ENCODE measurements at regions of chr19 and their contacts with region 1.

Region 1: GRCh38 chr19:54159352-54160181 is at the start of gene LENG1:
- DNase-seq: peak; percentile 99
- ATAC-seq: peak; percentile 90
- H3K4me3 Mint-ChIP-seq: peak within 1 kb of the TSS; percentile 87
- H3K27ac Mint-ChIP-seq: peak within 1 kb of the TSS; percentile 98
- H3K4me1 Mint-ChIP-seq: peaks cover 56% of the 10 kb centered on the region
- H3K27me3 Mint-ChIP-seq: peaks cover 7% of the 10 kb centered on the region
- total RNA-seq, gene LENG1: 3.5 to 3.6 TPM

Region 2: GRCh38 chr19:53977429-53977990 is 182.1 kb before region 1 on chr19:
- CTCF ChIA-PET with region 1: no interaction called
- POLR2A ChIA-PET with region 1: no interaction called
- intact Hi-C with region 1: loop called in 1 of 2 experiments (anchors 1 kb)
- DNase-seq: peak; percentile 79
- ATAC-seq: peak; percentile 61
- H3K4me3 Mint-ChIP-seq: peak overlapping the region; percentile 59
- H3K27ac Mint-ChIP-seq: no peak overlapping the region
- H3K4me1 Mint-ChIP-seq: peaks cover 30% of the 10 kb centered on the region
- H3K27me3 Mint-ChIP-seq: peaks cover 53% of the 10 kb centered on the region

Region 3: GRCh38 chr19:54017261-54017660 is 142.3 kb before region 1 on chr19:
- CTCF ChIA-PET with region 1: no interaction called
- POLR2A ChIA-PET with region 1: no interaction called
- intact Hi-C with region 1: no loop called
- DNase-seq: no peak
- ATAC-seq: no peak
- H3K4me3 Mint-ChIP-seq: no peak overlapping the region
- H3K27ac Mint-ChIP-seq: no peak overlapping the region
- H3K4me1 Mint-ChIP-seq: peaks cover 4% of the 10 kb centered on the region
- H3K27me3 Mint-ChIP-seq: peaks cover 28% of the 10 kb centered on the region

Region 4: DNA sequence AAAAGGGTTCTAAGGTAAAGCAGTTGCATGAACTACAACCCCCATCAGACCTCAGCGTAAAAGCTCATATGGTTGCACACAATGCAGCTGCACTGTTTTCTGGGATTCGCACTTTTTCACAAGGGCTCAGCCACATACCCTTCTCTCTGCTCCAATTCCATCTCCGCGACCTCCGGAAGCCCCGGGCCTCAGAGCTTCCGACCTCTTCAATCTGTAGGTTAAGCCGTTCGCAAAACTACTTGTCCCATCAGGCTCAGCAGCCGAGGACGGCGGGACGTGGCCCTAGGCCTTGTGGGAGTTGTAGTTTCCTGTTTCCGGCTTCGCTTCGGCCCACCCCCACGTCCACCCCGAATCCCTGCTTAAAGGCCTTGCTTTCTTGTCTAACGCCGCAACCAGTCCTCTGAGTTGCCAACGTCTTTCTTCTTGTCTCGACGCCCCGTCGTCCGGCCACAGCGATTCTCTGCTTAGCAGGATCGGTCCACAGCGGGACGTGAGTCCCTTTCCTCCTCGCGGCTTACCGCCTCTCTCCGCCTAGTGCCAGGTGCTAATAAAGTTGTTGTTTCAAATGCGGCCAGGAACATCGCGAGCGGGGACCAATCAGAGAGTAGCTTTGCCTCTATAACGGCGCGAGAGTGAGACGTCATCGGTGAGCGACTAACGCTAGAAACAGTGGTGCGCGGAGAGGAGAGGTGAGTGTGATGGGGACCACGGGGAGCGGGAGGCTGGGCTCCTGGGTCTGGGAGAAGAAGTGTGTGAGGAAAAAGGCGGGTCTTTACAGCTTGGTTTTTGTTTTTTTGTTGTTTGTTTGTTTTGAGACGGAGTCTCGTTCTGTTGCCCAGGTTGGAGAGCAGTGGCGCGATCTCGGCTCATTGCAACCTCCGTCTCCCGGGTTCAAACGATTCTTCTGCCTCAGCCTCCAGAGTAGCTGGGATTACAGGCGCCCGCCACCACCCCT is 44.2 kb before region 1 on chr19 and contains the starts of genes PRPF31 and TFPT:
- CTCF ChIA-PET with region 1: no interaction called
- POLR2A ChIA-PET with region 1: no interaction called
- intact Hi-C with region 1: loop called (anchors 1 to 2 kb)
- DNase-seq: peak; percentile 97
- ATAC-seq: peak; percentile 94
- H3K4me3 Mint-ChIP-seq: peak within 1 kb of the TSS; percentile 83
- H3K27ac Mint-ChIP-seq: peak within 1 kb of the TSS; percentile 96
- H3K4me1 Mint-ChIP-seq: peaks cover 25% of the 10 kb centered on the region
- H3K27me3 Mint-ChIP-seq: no peaks in the 10 kb centered on the region
- total RNA-seq, gene PRPF31: 85.5 to 115 TPM
- total RNA-seq, gene TFPT: 28.5 to 39.3 TPM

Region 5: GRCh38 chr19:54203151-54203611 is 43.6 kb after region 1 on chr19:
- CTCF ChIA-PET with region 1: no interaction called
- POLR2A ChIA-PET with region 1: interaction called, 3 read pairs
- intact Hi-C with region 1: loop called (anchors 1 to 5 kb)
- DNase-seq: no peak
- ATAC-seq: no peak
- H3K4me3 Mint-ChIP-seq: peak overlapping the region; percentile 97
- H3K27ac Mint-ChIP-seq: peak overlapping the region; percentile 100
- H3K4me1 Mint-ChIP-seq: peaks cover 67% of the 10 kb centered on the region
- H3K27me3 Mint-ChIP-seq: no peaks in the 10 kb centered on the region

Region 6: DNA sequence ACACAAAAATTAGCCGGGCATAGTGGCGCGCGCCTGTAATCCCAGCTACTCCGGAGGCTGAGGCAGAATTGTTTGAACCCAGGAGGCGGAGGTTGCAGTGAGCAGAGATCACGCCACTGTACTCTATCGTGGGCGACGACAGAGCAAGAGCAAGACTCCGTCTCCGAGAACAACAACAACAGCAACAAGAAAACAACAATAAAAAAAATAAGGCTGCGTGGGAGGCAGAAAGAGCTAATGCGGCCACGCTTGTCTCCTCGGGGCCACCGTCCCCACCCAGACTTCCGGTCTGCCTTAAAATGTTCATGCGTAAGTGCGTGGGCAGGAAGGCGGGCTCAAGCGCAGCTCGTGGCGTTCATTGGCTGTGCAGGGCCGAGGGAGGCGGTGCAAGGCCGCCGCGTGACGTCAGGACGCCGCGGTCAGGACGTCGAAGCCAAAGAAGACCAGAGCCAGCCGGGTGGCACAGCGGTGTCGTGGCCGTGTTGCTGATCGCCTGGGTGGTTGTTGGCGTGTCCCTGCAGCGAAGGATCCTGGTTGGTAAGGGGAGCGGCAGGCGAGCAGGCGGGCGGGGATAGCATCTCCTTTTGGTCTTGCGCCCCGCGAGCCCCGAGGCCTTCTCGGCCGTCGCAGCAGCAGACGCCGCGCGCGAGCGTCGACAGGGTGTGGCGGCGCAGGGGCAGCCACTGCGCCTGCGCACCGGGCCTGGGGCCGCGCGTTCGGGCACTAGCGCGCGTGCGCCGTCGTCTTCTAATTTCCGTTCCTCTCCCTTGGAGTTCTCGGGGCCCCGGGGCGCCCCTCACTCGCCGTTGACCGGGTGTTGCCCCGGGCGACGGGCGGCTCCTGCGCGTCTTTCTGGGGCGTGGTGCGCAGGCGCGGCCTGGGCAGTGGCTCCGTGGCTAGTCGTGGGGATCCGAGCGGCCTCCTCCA is 289.5 kb after region 1 on chr19 and contains the start of gene LENG8:
- CTCF ChIA-PET with region 1: no interaction called
- POLR2A ChIA-PET with region 1: no interaction called
- intact Hi-C with region 1: loop called in 1 of 2 experiments (anchors 1 kb)
- DNase-seq: peak; percentile 98
- ATAC-seq: peak; percentile 92
- H3K4me3 Mint-ChIP-seq: peak within 1 kb of the TSS; percentile 98
- H3K27ac Mint-ChIP-seq: peak within 1 kb of the TSS; percentile 98
- H3K4me1 Mint-ChIP-seq: peaks cover 36% of the 10 kb centered on the region
- H3K27me3 Mint-ChIP-seq: no peaks in the 10 kb centered on the region
- total RNA-seq, gene LENG8: 156 to 221 TPM

Region 7: GRCh38 chr19:54532528-54532927 is 373.0 kb after region 1 on chr19:
- CTCF ChIA-PET with region 1: no interaction called
- POLR2A ChIA-PET with region 1: no interaction called
- intact Hi-C with region 1: no loop called
- DNase-seq: no peak
- ATAC-seq: peak; percentile 84
- H3K4me3 Mint-ChIP-seq: no peak overlapping the region
- H3K27ac Mint-ChIP-seq: peak overlapping the region; percentile 60
- H3K4me1 Mint-ChIP-seq: peaks cover 24% of the 10 kb centered on the region
- H3K27me3 Mint-ChIP-seq: peaks cover 56% of the 10 kb centered on the region

Measured in activated CD4-positive, alpha-beta T cell treated with anti-CD3 and anti-CD28 coated beads for 36 hours (primary cell).